Common myeloid progenitor, CD34-positive (primary cell): ENCODE measurements at regions of chr18 and their contacts with region 1.

Region 1: GRCh38 chr18:9575558-9575957 is 38.8 kb downstream of the PPP4R1 start:
- DNase-seq: peak; percentile 74 to 80 (median 79)
- H3K4me3 ChIP-seq: no peak overlapping the region
- H3K27ac ChIP-seq: peak overlapping the region in 1 of 2 experiments; percentile 8
- H3K4me1 ChIP-seq: no peaks in the 10 kb centered on the region
- H3K27me3 ChIP-seq: no peaks in the 10 kb centered on the region

Region 2: GRCh38 chr18:9661564-9661963 is 86.0 kb after region 1 on chr18:
- CTCF ChIA-PET with region 1: interaction called, 10 read pairs
- POLR2A ChIA-PET with region 1: no interaction called
- DNase-seq: peak in 2 of 3 donors; percentile 15 to 17
- H3K4me3 ChIP-seq: no peak overlapping the region
- H3K27ac ChIP-seq: no peak overlapping the region
- H3K4me1 ChIP-seq: no peaks in the 10 kb centered on the region
- H3K27me3 ChIP-seq: no peaks in the 10 kb centered on the region